Activated CD8-positive, alpha-beta memory T cell treated with anti-CD3 and anti-CD28 coated beads, Interleukin-2, amount 10 ng/mL, durations not matched to agents 7 days and 5 days (primary cell): ENCODE measurements at regions of chr5 and their contacts with region 1.

Region 1: DNA sequence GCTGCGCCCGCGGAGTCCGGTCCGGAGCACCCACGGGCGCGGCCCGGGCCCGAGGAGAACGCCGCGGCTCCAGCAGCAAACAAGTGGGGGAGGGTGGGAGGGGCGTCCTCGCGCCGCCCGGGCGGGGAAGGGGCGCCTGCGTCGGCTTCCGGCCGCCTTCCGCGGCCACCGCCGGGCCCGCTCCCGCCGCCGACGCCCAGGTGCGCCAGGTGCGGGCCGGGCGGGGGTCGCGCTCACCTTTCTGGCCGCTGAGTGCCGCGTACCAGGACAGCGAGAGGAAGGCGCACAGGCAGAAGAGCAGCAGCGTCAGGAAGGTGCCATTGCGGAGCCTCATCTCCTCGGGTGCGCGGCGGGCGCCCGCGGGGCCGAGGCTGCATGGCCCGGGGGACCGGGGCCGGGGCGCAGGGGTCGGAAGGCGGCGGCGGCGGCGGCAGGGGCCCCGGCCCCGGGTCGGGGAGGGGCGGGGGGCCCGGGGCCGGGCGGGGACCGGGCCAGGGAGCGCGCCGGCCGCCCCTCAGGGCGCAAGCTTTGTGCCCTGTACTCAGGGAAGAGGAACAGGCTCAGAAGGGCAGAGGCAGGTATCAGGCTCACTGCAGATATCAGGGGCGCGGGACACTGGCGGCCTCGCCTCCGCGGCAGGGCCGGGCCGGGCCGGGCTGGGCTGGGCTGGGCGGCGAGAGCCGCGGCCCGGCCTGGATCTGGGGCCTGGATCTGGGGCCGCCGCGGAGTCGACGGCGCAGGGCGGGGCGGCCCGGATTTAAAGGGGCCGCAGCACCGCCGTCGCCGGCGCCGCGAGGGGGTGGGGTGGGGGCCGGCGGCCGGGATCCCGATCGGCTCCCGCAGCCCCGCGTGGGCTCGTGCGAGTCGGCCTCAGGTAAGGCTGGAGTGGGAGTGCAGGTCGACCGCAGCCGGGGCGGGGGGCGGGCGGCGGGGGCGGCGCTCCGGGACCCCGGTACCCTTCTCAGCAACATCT is at the start of gene MGAT4B:
- DNase-seq: peak; percentile 77
- ATAC-seq: peak; percentile 84
- H3K4me3 Mint-ChIP-seq: peak within 1 kb of the TSS; percentile 70
- H3K27ac Mint-ChIP-seq: peak within 1 kb of the TSS; percentile 77
- H3K4me1 Mint-ChIP-seq: peaks cover 34% of the 10 kb centered on the region
- H3K27me3 Mint-ChIP-seq: no peaks in the 10 kb centered on the region
- total RNA-seq, gene MGAT4B: 100 to 116 TPM

Region 2: DNA sequence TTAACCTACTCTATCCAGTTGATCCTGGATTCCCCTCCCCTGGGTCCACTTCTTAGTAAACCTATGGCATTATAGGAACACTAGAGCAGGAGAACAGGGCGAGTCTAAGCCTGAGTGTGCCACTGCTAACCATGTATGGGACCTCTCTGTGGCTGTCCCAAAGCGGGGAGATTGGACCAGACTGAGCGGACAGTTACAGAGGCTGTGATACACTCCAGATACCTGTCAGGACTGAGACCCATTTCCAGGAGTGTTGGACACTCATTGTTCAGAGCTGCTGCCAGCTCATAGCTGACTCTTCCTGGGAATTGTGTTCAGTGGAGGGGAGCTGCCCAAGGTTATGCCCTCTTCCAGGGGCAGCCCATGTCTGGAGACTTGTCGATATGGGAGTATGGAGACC is 24.7 kb before region 1 on chr5:
- CTCF ChIA-PET with region 1: no interaction called
- DNase-seq: no peak
- ATAC-seq: no peak
- H3K4me3 Mint-ChIP-seq: no peak overlapping the region
- H3K27ac Mint-ChIP-seq: no peak overlapping the region
- H3K4me1 Mint-ChIP-seq: no peaks in the 10 kb centered on the region
- H3K27me3 Mint-ChIP-seq: no peaks in the 10 kb centered on the region

Region 3: DNA sequence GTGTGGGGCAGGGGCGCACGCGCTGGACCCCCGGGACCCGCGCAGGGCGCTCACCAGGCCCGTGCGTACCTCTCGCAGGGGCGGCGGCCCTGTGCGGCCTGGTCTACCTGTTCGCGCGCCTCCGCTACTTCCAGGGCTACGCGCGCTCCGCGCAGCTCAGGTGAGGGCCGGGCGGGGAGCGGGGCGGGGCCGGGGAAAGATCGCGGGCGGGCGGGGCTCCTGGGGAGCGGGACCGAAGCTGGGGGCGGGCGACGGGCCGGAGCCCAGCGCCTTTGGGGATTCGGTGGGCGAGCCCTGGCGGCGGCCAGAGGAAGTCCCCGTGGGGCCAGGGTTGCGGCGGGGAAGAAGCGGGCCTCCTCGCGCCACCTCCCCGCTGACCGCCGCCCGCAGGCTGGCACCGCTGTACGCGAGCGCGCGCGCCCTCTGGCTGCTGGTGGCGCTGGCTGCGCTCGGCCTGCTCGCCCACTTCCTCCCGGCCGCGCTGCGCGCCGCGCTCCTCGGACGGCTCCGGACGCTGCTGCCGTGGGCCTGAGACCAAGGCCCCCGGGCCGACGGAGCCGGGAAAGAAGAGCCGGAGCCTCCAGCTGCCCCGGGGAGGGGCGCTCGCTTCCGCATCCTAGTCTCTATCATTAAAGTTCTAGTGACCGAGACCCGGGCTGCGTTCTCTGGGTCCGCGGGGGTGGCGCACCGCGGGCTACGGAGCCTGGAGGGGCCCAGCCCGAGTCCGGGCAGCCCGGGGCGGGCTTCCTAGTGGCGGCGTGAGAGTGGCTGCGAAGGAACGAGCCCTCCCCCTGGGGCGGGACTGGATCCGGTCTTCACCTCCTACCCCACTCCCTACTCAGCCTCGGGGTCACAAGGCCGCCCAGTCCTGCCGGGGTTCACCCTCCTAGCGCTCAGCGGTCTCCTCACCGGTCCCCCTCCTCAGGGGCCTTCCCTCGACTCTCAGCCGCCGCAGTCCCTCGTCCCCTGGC is 10.4 kb before region 1 on chr5:
- CTCF ChIA-PET with region 1: interaction called, 12 read pairs
- DNase-seq: peak; percentile 73
- ATAC-seq: peak; percentile 79
- H3K4me3 Mint-ChIP-seq: peak overlapping the region; percentile 53
- H3K27ac Mint-ChIP-seq: peak overlapping the region; percentile 31
- H3K4me1 Mint-ChIP-seq: peaks cover 34% of the 10 kb centered on the region
- H3K27me3 Mint-ChIP-seq: no peaks in the 10 kb centered on the region

Region 4: DNA sequence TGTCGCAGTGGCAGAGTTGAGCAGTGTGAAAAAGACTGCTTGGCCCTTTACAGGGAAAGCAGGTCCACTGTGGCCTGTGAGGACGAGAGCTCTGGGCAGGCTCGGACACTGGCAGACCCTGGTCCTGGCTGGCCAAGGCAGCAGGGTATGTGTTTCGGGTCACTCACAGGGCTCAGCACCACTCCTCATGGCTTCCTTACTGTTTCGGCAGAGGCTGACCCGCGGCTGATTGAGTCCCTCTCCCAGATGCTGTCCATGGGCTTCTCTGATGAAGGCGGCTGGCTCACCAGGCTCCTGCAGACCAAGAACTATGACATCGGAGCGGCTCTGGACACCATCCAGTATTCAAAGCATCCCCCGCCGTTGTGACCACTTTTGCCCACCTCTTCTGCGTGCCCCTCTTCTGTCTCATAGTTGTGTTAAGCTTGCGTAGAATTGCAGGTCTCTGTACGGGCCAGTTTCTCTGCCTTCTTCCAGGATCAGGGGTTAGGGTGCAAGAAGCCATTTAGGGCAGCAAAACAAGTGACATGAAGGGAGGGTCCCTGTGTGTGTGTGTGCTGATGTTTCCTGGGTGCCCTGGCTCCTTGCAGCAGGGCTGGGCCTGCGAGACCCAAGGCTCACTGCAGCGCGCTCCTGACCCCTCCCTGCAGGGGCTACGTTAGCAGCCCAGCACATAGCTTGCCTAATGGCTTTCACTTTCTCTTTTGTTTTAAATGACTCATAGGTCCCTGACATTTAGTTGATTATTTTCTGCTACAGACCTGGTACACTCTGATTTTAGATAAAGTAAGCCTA is 29.9 kb after region 1 on chr5:
- CTCF ChIA-PET with region 1: interaction called, 12 read pairs
- DNase-seq: peak; percentile 81
- ATAC-seq: peak; percentile 96
- H3K4me3 Mint-ChIP-seq: peak overlapping the region; percentile 64
- H3K27ac Mint-ChIP-seq: peak overlapping the region; percentile 90
- H3K4me1 Mint-ChIP-seq: peaks cover 23% of the 10 kb centered on the region
- H3K27me3 Mint-ChIP-seq: no peaks in the 10 kb centered on the region

Region 5: DNA sequence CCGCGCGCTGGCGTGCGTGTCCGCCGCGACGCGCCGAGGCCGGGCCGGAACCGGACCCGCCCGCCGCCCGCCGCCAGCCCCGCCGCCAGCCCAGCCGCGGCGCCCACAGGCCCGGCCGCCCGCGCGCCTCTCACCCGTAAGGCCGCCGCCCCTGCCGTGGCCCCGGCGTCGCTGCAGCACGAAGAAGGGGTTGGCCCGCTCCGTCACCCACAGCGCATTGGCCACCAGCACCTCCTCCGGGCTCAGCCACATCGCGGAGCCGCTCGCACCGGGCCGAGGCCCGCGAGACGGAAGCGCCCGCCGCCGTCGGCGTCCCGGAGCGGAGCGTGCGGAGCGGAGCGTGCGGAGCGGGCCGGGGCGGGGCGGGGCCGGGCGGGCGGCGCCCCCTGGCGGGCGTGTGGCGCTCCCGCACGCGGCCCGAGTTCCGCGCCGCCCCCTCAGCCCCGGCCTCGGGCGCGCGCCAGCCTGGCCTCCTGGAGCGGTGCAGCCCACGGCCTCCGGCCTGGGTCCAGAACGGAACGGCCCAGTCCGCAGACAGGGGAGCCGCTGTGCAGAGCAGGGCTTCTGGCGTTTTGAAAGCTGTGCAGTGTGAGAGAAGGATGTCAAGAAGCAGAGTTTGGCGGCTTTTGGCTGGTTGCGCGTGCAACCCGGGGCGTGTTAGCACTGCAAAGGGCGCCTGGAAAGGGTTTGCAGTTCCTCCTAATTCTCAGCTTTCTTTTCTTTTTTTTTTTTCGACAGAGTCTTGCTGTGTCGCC is 101.2 kb after region 1 on chr5 and contains the start of gene TBC1D9B:
- CTCF ChIA-PET with region 1: interaction called, 29 read pairs
- DNase-seq: peak; percentile 69
- ATAC-seq: peak; percentile 93
- H3K4me3 Mint-ChIP-seq: peak within 1 kb of the TSS; percentile 83
- H3K27ac Mint-ChIP-seq: peak within 1 kb of the TSS; percentile 75
- H3K4me1 Mint-ChIP-seq: peaks cover 18% of the 10 kb centered on the region
- H3K27me3 Mint-ChIP-seq: no peaks in the 10 kb centered on the region
- total RNA-seq, gene TBC1D9B: 71.6 to 83.3 TPM

Region 6: DNA sequence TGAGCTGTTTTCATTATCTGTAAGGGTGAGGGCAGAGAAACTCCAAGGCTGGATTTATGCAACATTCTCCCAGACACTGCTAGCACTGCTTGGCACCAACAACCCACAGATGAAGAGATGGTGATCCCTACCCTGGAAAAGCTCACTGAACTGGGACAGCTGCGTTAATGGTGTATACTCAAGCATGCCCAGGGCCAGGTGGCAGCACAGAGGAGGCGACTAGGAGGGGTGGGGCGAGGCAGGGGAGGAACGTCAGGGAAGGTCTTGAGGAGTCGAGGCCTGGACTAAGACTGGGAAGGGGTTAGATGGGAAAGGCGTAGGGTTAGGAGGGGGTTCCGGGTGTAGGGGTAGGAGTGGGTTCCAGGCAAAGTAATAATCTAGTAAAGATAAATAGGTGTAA is 174.2 kb after region 1 on chr5:
- CTCF ChIA-PET with region 1: no interaction called
- DNase-seq: no peak
- ATAC-seq: no peak
- H3K4me3 Mint-ChIP-seq: no peak overlapping the region
- H3K27ac Mint-ChIP-seq: no peak overlapping the region
- H3K4me1 Mint-ChIP-seq: no peaks in the 10 kb centered on the region
- H3K27me3 Mint-ChIP-seq: no peaks in the 10 kb centered on the region